Aorta (tissue), 5 donors: ENCODE measurements at regions of chr11 and their contacts with region 1.

Region 1: GRCh38 chr11:43895601-43896000 is 15.0 kb downstream of the ALKBH3 start:
- DNase-seq: no peak
- ATAC-seq: no peak
- H3K4me3 ChIP-seq: no peak overlapping the region
- H3K27ac ChIP-seq: no peak overlapping the region
- H3K4me1 ChIP-seq: no peaks in the 10 kb centered on the region
- H3K27me3 ChIP-seq: no peaks in the 10 kb centered on the region

Region 2: DNA sequence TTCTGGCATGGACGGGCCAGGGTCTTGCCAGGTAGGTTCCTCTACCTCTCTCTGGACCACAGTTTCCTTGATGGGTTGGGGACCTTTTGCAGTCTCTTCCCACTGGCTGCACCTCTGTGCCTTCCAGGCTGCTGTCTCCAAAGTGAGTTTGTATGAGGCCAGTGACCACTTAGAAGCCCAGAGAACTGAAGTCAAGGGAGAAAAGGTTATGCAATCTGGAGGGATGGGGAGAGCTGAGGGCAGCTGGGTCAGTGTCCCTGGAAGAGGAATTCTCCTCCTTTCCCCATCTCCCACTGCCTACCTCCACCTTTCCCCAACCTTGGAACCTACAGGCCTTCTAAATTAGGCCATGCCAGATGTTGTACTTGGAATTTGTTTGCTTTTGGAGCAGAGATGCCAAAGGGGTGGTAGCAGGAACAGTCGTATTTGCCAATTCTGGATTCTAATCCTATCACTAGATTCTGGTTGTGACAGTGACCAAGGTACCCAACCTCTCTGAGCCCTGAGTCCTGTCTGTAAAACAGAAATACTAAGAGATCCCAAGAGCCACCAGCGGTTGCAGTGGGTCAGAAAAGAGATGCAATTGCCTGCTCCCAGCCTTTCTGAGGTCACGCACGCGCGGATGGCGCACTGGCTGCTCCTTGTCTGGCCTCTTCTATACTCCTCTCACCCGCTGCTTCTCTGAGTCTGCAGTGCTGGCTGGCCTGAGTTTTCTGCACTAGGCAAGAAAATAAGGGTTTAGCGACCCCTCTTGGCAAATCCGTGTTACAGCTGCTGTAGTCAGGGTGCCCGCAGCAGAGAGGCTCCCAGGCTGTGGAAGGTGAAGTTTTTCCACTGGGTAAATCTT is 141.4 kb after region 1 on chr11:
- intact Hi-C with region 1: loop called (anchors 1 to 2 kb)
- DNase-seq: peak; percentile 91 to 93
- ATAC-seq: peak; percentile 95
- H3K4me3 ChIP-seq: no peak overlapping the region
- H3K27ac ChIP-seq: peak overlapping the region in 1 of 2 donors; percentile 54
- H3K4me1 ChIP-seq: peaks cover 5 to 6% of the 10 kb centered on the region in 2 donors
- H3K27me3 ChIP-seq: no peaks in the 10 kb centered on the region